Activated CD4-positive, alpha-beta T cell treated with anti-CD3 and anti-CD28 coated beads, Interleukin-2, amount 10 ng/mL, durations not matched to agents 24 days and 14 days (primary cell): ENCODE measurements at regions of chr3 and their contacts with region 1.

Region 1: GRCh38 chr3:16600780-16601539 is 4.3 kb downstream of the DAZL start:
- DNase-seq: peak; percentile 91
- H3K4me3 Mint-ChIP-seq: no peak overlapping the region
- H3K27ac Mint-ChIP-seq: no peak overlapping the region
- H3K4me1 Mint-ChIP-seq: peaks cover 19% of the 10 kb centered on the region
- H3K27me3 Mint-ChIP-seq: peaks cover 38% of the 10 kb centered on the region

Region 2: GRCh38 chr3:16290007-16290826 is 310.7 kb before region 1 on chr3:
- intact Hi-C with region 1: loop called (anchors 1 kb)
- DNase-seq: peak; percentile 89
- H3K4me3 Mint-ChIP-seq: peak overlapping the region; percentile 93
- H3K27ac Mint-ChIP-seq: peak overlapping the region; percentile 92
- H3K4me1 Mint-ChIP-seq: peaks cover 66% of the 10 kb centered on the region
- H3K27me3 Mint-ChIP-seq: no peaks in the 10 kb centered on the region

Region 3: DNA sequence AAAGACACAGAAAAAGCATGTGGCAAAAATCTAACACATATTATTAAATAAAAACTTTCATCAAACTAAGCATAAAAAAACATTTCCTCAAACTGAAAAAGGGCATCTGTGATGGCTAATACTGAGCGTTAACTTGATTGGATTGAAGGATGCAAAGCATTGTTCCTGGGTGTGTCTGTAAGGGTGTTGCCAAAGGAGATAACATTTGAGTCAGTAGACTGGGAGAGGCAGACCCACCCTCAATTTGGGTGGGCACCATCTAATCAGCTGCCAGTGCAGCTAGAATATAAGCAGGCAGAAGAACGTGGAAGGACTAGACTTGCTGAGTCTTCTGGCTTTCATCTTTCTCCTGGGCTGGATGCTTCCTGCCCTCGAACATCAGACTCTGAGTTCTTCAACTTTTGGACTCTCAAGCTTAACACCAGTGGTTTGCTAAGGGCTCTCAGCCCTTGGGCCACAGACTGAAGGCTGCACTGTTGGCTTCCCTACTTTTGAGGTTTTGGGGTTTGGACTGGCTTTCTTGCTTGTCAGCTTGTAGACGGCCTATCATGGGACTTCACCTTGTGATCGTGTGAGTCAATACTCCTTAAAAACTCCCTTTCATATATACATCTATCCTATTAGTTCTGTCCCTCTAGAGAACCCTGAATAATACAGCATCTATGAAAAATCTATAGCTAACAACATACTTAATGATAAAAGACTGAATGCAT is 41.2 kb before region 1 on chr3:
- intact Hi-C with region 1: no loop called
- DNase-seq: no peak
- H3K4me3 Mint-ChIP-seq: no peak overlapping the region
- H3K27ac Mint-ChIP-seq: no peak overlapping the region
- H3K4me1 Mint-ChIP-seq: no peaks in the 10 kb centered on the region
- H3K27me3 Mint-ChIP-seq: peaks cover 17% of the 10 kb centered on the region

Region 4: GRCh38 chr3:16795581-16795980 is 194.6 kb after region 1 on chr3:
- intact Hi-C with region 1: loop called (anchors 5 kb)
- DNase-seq: no peak
- H3K4me3 Mint-ChIP-seq: no peak overlapping the region
- H3K27ac Mint-ChIP-seq: no peak overlapping the region
- H3K4me1 Mint-ChIP-seq: peaks cover 20% of the 10 kb centered on the region
- H3K27me3 Mint-ChIP-seq: peaks cover 10% of the 10 kb centered on the region

Region 5: GRCh38 chr3:16884084-16884747 is 283.3 kb after region 1 on chr3:
- intact Hi-C with region 1: loop called (anchors 1 kb)
- DNase-seq: peak; percentile 89
- H3K4me3 Mint-ChIP-seq: peak overlapping the region; percentile 92
- H3K27ac Mint-ChIP-seq: peak overlapping the region; percentile 98
- H3K4me1 Mint-ChIP-seq: peaks cover 32% of the 10 kb centered on the region
- H3K27me3 Mint-ChIP-seq: peaks cover 10% of the 10 kb centered on the region

Region 6: DNA sequence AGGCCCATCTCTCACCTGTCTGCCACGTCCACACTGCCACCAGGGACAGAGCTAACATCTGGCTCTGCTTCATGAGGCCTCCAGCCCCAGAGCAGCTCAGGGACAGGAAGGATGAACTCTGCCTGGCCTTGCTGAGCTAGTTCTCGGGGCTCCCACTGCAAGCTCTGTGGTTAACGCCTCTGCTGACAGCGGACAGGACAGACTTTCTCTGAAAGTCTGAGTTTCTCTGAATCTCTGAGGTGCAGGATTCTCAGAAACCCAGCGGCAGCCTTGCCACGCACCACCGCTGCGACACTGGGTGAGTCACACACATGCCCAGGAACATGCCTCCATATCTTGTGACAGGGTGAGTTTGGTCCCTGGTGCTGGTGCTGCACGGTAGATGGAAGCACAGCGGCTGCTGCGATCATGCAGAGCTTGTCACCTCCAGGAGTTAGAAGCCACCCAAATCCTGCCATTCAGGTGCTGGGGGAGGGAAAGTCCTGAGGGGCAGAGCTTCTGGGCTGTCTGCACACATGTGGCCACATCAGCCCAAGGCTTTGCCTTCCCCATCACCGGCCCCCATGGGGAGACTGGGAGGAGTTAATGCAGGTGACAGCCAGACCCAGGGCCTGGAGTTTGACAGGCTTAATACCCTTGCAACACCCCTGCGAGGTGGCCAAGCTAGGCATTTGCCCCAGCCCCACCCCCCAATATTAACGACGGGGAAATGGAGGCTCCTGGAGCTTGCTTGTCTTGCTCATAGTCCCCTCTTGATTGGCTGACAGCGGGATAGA is 550.8 kb after region 1 on chr3:
- intact Hi-C with region 1: loop called (anchors 2 kb)
- DNase-seq: peak; percentile 97
- H3K4me3 Mint-ChIP-seq: peak overlapping the region; percentile 80
- H3K27ac Mint-ChIP-seq: peak overlapping the region; percentile 93
- H3K4me1 Mint-ChIP-seq: peaks cover 66% of the 10 kb centered on the region
- H3K27me3 Mint-ChIP-seq: no peaks in the 10 kb centered on the region

Region 7: GRCh38 chr3:17412950-17413530 is 812.1 kb after region 1 on chr3:
- intact Hi-C with region 1: loop called (anchors 2 kb)
- DNase-seq: peak; percentile 78
- H3K4me3 Mint-ChIP-seq: no peak overlapping the region
- H3K27ac Mint-ChIP-seq: no peak overlapping the region
- H3K4me1 Mint-ChIP-seq: no peaks in the 10 kb centered on the region
- H3K27me3 Mint-ChIP-seq: no peaks in the 10 kb centered on the region